ENCODE measurements at regions of chrX and their contacts with region 1.

Region 1: DNA sequence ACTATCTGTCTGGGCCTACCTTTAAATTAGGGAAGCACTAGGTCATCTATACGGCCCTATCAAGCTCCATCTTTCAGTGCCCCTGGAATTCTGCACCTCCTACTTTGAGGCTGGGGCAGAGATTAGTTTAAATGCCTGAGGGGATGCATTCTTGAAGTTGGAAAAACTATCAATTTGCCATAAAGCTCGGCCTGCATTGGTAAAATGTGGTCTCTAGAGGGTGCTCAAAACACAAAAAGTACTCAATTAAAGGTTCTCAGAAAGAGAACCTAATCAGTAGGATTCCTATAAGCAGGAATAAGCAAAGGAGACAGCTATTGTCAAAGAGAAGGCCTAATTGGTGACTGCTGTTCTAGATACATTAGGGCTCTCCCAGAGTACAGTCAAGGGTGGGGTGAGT is 111.7 kb downstream of the AMER1 start:
- DNase-seq: no peak
- ATAC-seq: no peak

Region 2: GRCh38 chrX:64205735-64206491 is 112.2 kb after region 1 on chrX:
- intact Hi-C with region 1: loop called (anchors 10 kb)
- DNase-seq: peak; percentile 95
- ATAC-seq: peak; percentile 94

Measured in Right ventricle myocardium superior (tissue), 1 donor.